Activated T-helper 1 cell treated with anti-CD3 and anti-CD28 coated beads, Interleukin-12 subunit alpha, Interleukin-12 subunit beta, Interleukin-2, Interleukin-4 antibody, amounts not matched to agents 30 ng/mL and 10 ng/mL and 1 ng/mL, durations not matched to agents 14 hours and 24 hours and 36 hours (primary cell): ENCODE measurements at regions of chr1 and their contacts with region 1.

Region 1: GRCh38 chr1:100459358-100460114 is 78.4 kb upstream of the GPR88 start:
- DNase-seq: peak; percentile 55
- H3K4me3 Mint-ChIP-seq: no peak overlapping the region
- H3K27ac Mint-ChIP-seq: no peak overlapping the region
- H3K4me1 Mint-ChIP-seq: peaks cover 43% of the 10 kb centered on the region
- H3K27me3 Mint-ChIP-seq: no peaks in the 10 kb centered on the region

Region 2: GRCh38 chr1:99808391-99809115 is 651.0 kb before region 1 on chr1:
- intact Hi-C with region 1: loop called (anchors 1 kb)
- DNase-seq: peak; percentile 29
- H3K4me3 Mint-ChIP-seq: no peak overlapping the region
- H3K27ac Mint-ChIP-seq: peak overlapping the region; percentile 15
- H3K4me1 Mint-ChIP-seq: peaks cover 17% of the 10 kb centered on the region
- H3K27me3 Mint-ChIP-seq: peaks cover 13% of the 10 kb centered on the region

Region 3: DNA sequence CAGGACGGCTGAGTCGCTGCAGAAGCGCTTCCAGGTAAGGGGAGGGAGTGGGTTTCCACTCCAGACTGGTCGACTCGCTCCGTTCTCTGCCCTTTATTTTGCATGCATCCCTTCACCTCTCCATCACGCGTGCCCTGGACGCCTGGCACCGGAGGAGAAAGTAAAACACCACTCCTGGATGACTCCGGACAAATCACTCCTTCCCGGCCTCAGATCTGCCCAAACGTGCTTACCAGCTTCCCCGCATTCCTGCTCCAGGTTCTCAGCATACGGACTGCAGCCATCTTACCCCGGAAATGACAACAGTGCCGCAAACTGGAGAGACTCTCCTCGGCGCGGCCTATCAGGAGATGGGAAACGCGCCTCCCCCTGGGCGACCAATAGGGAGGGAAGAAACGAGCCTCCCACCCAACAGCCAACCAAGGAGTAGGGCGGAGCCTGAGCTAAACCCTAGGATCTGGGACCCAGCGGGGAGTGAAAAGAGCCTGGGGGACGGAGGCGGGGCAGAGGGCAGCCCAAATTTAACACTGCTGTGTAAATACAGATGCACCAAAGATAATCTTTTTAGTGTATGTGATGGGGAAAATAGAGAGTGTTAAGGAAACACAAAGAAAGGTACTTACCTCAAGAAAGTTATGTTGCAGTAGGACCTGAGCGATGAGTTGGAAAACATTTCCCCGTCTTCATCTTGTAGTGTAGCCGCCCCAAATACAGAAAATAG is 209.8 kb before region 1 on chr1 and contains the start of gene DBT:
- intact Hi-C with region 1: loop called (anchors 5 kb)
- DNase-seq: peak; percentile 92
- H3K4me3 Mint-ChIP-seq: no peak within 1 kb of the TSS
- H3K27ac Mint-ChIP-seq: no peak within 1 kb of the TSS
- H3K4me1 Mint-ChIP-seq: peaks cover 10% of the 10 kb centered on the region
- H3K27me3 Mint-ChIP-seq: peaks cover 12% of the 10 kb centered on the region
- total RNA-seq, gene DBT: 11.3 and 11.7 TPM in 2 replicates

Region 4: GRCh38 chr1:100277866-100278265 is 181.7 kb before region 1 on chr1:
- intact Hi-C with region 1: loop called (anchors 1 kb)
- DNase-seq: no peak
- H3K4me3 Mint-ChIP-seq: no peak overlapping the region
- H3K27ac Mint-ChIP-seq: no peak overlapping the region
- H3K4me1 Mint-ChIP-seq: peaks cover 28% of the 10 kb centered on the region
- H3K27me3 Mint-ChIP-seq: no peaks in the 10 kb centered on the region

Region 5: DNA sequence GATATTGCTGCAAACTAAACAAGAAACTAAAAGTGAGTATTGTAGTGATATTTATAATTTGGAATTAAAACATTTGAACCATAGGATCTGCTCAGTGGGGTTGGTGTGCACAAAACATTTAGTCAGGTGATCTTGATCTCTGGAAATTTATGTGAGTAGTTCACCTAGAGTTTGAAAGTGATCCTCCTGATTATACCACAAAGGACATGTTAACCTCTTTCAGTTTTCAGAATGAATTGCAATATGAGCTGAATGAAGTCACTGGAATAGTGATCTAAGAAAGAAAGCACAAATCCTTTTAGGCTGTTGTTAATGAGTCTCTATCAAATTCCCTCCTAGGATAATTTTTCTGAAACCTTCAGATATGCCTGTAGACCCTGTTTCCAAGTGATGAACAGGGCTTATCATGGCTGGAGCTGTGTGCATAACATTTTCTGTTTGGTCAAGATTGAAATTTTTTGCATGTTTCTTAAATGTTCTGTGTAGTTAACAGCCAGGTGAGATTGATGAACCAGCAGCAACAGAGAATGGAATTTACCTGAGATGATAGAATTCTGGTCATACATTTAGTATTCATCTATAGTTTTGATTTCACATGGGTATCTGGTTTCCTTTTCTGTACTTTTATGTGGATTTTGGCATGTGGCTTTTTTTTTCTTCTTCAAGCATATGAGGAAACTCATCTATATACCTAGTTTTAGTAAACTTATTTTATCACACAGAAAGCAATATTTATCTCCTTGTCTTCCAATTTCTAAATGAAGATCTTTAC is 81.8 kb before region 1 on chr1:
- intact Hi-C with region 1: loop called (anchors 2 kb)
- DNase-seq: no peak
- H3K4me3 Mint-ChIP-seq: peak overlapping the region; percentile 38
- H3K27ac Mint-ChIP-seq: peak overlapping the region; percentile 75
- H3K4me1 Mint-ChIP-seq: peaks cover 55% of the 10 kb centered on the region
- H3K27me3 Mint-ChIP-seq: peaks cover 2% of the 10 kb centered on the region

Region 6: DNA sequence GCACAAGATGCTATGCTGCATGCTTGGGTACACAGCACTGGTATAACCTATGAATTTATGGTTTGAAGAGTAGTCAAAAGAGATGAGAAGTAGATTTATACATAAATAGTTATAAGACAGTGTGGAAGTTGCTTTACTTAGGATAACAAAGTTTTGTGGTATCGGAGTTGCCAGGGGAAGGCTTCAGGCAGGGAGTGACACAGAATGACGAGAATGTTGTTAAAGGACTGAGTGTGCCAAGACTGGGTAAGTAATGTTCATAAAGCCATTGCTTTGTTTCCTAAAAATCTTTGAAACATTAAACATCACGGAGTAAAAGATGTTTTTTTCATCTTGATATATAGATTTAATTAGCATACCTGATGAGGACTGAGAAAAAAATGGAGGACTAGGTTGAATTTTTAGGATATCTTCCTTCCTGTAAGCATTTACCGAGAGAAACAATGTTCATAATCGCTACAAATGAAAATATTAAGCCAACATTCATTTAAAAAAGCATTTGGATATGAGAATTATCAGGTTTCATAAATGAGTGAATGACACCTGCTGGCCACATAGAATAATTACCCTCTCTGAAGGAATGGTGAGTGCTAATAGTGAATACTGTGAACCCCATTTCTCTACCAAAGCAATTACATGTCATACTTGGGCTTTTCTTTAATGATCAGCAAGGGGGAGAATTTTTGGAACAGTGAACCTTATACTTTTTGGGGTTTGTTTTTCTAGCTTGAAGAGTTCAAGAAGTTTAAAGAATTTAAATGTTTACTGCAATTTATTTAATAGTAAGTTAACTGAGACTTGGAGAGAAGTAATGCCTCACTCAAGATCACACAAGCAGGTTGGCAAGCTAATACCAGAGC is 406.7 kb after region 1 on chr1:
- intact Hi-C with region 1: loop called (anchors 1 kb)
- DNase-seq: no peak
- H3K4me3 Mint-ChIP-seq: no peak overlapping the region
- H3K27ac Mint-ChIP-seq: no peak overlapping the region
- H3K4me1 Mint-ChIP-seq: no peaks in the 10 kb centered on the region
- H3K27me3 Mint-ChIP-seq: no peaks in the 10 kb centered on the region